Gastrocnemius medialis (tissue), 4 donors: ENCODE measurements at regions of chr12 and their contacts with region 1.

Region 1: GRCh38 chr12:751192-751998 is 984 bp upstream of the WNK1 start:
- DNase-seq: peak; percentile 88 to 93
- ATAC-seq: peak; percentile 45 to 64
- H3K4me3 ChIP-seq: peak overlapping the region; percentile 48 to 92 (median 78)
- H3K27ac ChIP-seq: peak overlapping the region; percentile 97 to 99 (median 99)
- H3K4me1 ChIP-seq: peaks cover 18 to 22% of the 10 kb centered on the region in 2 donors
- H3K27me3 ChIP-seq: no peaks in the 10 kb centered on the region
- CTCF ChIP-seq: peak; percentile 76 to 84 (median 82)
- POLR2A ChIP-seq: peak; percentile 43 to 62

Region 2: DNA sequence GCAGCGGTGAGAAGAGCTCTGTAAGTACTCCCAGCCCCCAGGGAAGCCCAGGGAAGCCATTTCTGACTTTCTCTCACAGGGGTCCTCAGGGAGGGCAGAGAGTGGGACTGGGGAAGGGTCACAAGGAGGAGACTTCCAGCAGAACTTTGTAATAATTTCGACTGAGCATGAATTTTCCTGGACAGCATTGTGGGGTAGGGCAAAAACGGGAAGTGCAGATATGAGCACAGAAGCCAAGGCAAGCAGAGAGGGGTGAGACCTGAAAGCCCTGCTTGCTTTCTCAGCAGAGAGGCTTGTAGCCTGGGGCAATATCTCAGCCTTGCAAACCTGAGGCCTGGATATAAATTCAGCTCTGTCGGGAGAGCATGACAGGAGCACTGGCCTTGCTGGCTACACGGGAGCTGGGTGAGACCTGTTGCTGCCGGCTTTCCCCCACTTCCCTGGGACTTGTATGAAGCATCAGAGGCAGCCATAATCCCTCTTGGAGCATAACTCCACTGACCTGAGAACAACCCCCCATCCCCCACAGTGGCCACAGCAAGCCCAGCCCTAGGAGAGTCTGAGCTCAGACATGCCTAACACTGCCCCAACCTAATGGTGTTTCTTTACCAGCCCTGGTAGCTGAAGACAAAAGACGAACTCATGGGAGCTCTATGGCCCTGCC is 694.6 kb before region 1 on chr12:
- in situ Hi-C with region 1: no loop called
- intact Hi-C with region 1: no loop called
- DNase-seq: no peak
- ATAC-seq: no peak
- H3K4me3 ChIP-seq: no peak overlapping the region
- H3K27ac ChIP-seq: no peak overlapping the region
- H3K4me1 ChIP-seq: no peaks in the 10 kb centered on the region
- H3K27me3 ChIP-seq: peaks cover 27 to 57% (median 48%) of the 10 kb centered on the region in 3 donors
- CTCF ChIP-seq: no peak
- POLR2A ChIP-seq: no peak

Region 3: DNA sequence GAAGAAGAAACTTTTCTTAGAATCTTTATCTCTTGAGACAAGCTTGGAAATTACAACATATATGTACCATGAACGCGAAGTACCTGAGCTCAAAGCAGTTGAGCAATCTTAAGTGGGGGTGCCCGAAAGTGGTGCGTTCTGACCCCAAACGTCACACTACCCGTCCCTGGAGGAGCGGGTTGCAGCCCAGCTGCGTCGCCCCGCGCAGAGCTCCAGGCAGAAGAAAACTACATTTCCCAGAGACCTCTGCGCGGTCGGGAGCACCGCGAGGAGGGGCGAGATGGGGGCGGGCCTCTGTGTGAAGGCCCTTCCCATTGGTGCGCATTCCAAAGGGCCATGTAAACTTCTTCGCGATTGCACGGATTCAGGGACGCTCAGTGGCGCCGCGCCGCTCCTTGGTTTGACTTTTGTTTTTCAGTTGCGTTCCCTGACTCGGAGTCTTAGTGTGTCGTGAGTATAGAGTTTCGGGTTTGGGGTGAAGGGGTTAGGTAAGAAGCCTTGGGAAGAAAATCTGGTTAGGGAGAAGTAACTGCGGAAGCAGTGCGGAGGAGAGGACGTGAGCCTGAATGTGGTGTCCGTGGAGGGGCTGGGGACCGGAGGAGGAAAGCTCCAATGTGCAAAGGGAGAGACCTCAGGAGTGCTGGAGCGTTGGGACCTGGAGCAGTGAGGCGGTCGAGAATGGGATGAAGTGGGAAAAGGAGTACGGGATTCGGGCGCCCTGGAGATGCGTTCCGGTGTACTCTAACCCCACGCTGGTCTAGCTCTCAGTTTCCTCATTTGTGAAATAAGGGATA is 350.0 kb before region 1 on chr12 and contains the start of gene CCDC77:
- in situ Hi-C with region 1: no loop called
- intact Hi-C with region 1: loop called (anchors 5 kb)
- DNase-seq: peak; percentile 88 to 92
- ATAC-seq: peak; percentile 99
- H3K4me3 ChIP-seq: peak within 1 kb of the TSS; percentile 70 to 80 (median 72)
- H3K27ac ChIP-seq: peak within 1 kb of the TSS; percentile 81 to 87 (median 82)
- H3K4me1 ChIP-seq: peaks cover 16 to 19% of the 10 kb centered on the region in 2 donors
- H3K27me3 ChIP-seq: no peaks in the 10 kb centered on the region
- CTCF ChIP-seq: peak in 2 of 5 experiments; percentile 29 to 30
- POLR2A ChIP-seq: peak; percentile 20 to 63
- total RNA-seq, gene CCDC77: 2.6 to 20.2 (median 7.4) TPM

Region 4: GRCh38 chr12:575948-576612 is 175.3 kb before region 1 on chr12:
- in situ Hi-C with region 1: loop called (anchors 5 to 25 kb)
- intact Hi-C with region 1: loop called (anchors 1 kb)
- DNase-seq: peak; percentile 42 to 74
- ATAC-seq: peak; percentile 46 to 49
- H3K4me3 ChIP-seq: peak overlapping the region in 3 of 4 donors; percentile 11 to 29 (median 14)
- H3K27ac ChIP-seq: peak overlapping the region; percentile 50 to 73 (median 67)
- H3K4me1 ChIP-seq: peaks cover 42 to 45% of the 10 kb centered on the region in 2 donors
- H3K27me3 ChIP-seq: no peaks in the 10 kb centered on the region
- CTCF ChIP-seq: peak; percentile 99
- POLR2A ChIP-seq: peak in 1 of 2 donors; percentile 10

Region 5: GRCh38 chr12:724194-724855 is 27.1 kb before region 1 on chr12:
- in situ Hi-C with region 1: no loop called
- intact Hi-C with region 1: loop called (anchors 2 kb)
- DNase-seq: no peak
- ATAC-seq: peak in 1 of 2 donors; percentile 13
- H3K4me3 ChIP-seq: no peak overlapping the region
- H3K27ac ChIP-seq: peak overlapping the region in 3 of 4 donors; percentile 7 to 45 (median 23)
- H3K4me1 ChIP-seq: peaks cover 6 to 17% of the 10 kb centered on the region in 2 donors
- H3K27me3 ChIP-seq: no peaks in the 10 kb centered on the region
- CTCF ChIP-seq: no peak
- POLR2A ChIP-seq: no peak

Region 6: GRCh38 chr12:949453-950191 is 198.2 kb after region 1 on chr12 and contains the start of gene RAD52:
- in situ Hi-C with region 1: no loop called
- intact Hi-C with region 1: loop called (anchors 1 kb)
- DNase-seq: peak; percentile 96 to 98
- ATAC-seq: peak; percentile 92 to 94
- H3K4me3 ChIP-seq: peak within 1 kb of the TSS; percentile 78 to 94 (median 92)
- H3K27ac ChIP-seq: peak within 1 kb of the TSS; percentile 91 to 97 (median 94)
- H3K4me1 ChIP-seq: peaks cover 16 to 25% of the 10 kb centered on the region in 2 donors
- H3K27me3 ChIP-seq: no peaks in the 10 kb centered on the region
- CTCF ChIP-seq: peak; percentile 96 to 100 (median 99)
- POLR2A ChIP-seq: peak; percentile 81 to 88
- total RNA-seq, gene RAD52: 11.3 to 21.0 (median 14.3) TPM